Spleen (tissue), 13 donors: ENCODE measurements at regions of chr9 and their contacts with region 1.

Region 1: DNA sequence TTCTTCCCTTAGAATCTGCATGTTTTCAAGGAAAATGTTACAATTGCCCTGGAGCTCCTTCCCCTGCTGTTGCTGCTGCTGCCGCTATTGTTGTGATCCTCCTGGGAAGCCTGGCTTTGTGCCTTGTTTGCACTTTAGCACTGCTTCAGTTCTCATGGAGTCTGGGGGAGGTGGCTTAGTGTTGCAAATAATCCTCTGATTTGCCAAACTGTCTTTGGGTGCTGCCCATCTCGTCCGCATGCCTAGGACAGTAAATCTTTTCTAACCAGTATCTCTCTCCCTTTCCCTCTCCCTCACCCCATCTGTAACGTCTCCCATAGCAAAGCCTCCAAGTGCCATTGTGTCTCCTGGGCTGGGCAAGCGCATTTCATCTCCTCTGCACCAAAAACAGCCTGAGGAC is 30.3 kb downstream of the FAM240B start:
- DNase-seq: no peak
- H3K4me3 ChIP-seq: no peak overlapping the region
- H3K27ac ChIP-seq: no peak overlapping the region
- H3K4me1 ChIP-seq: peaks cover 0 to 10% (median 2%) of the 10 kb centered on the region in 6 donors
- H3K27me3 ChIP-seq: peaks cover 0 to 23% (median 0%) of the 10 kb centered on the region in 7 donors
- CTCF ChIP-seq: no peak
- POLR2A ChIP-seq: no peak

Region 2: DNA sequence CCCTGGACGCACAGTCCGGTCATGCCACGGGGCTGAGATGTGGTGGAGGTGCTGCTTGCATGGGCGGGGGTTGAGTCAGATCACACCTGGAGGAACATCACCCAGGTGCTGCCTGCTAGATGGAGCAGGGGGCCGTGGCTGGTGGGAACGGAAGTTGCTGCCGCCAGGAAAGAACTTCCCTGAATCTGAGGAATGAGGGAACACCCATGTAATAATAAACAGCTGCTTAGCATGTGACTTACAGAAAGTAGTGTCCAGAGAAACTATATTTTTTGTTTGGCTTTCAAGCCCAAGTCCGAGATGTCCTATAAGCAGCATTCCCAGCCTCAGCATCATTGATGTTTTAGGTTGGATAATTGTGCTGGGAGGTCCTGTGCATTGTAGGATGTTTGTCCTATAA is 57.4 kb after region 1 on chr9:
- intact Hi-C with region 1: loop called (anchors 5 kb)
- DNase-seq: no peak
- H3K4me3 ChIP-seq: no peak overlapping the region
- H3K27ac ChIP-seq: no peak overlapping the region
- H3K4me1 ChIP-seq: no peaks in the 10 kb centered on the region
- H3K27me3 ChIP-seq: no peaks in the 10 kb centered on the region
- CTCF ChIP-seq: no peak
- POLR2A ChIP-seq: no peak